Mammary epithelial cell (primary cell): ENCODE measurements at regions of chr9 and their contacts with region 1.

Region 1: GRCh38 chr9:38068866-38069629 is at the start of gene SHB:
- DNase-seq: peak; percentile 58
- H3K4me3 ChIP-seq: peak within 1 kb of the TSS; percentile 79 to 90 (median 84)
- H3K27ac ChIP-seq: peak within 1 kb of the TSS; percentile 44
- H3K4me1 ChIP-seq: peaks cover 21% of the 10 kb centered on the region
- H3K27me3 ChIP-seq: no peaks in the 10 kb centered on the region
- CTCF ChIP-seq: no peak
- total RNA-seq, gene SHB: 30.5 to 31.5 TPM

Region 2: DNA sequence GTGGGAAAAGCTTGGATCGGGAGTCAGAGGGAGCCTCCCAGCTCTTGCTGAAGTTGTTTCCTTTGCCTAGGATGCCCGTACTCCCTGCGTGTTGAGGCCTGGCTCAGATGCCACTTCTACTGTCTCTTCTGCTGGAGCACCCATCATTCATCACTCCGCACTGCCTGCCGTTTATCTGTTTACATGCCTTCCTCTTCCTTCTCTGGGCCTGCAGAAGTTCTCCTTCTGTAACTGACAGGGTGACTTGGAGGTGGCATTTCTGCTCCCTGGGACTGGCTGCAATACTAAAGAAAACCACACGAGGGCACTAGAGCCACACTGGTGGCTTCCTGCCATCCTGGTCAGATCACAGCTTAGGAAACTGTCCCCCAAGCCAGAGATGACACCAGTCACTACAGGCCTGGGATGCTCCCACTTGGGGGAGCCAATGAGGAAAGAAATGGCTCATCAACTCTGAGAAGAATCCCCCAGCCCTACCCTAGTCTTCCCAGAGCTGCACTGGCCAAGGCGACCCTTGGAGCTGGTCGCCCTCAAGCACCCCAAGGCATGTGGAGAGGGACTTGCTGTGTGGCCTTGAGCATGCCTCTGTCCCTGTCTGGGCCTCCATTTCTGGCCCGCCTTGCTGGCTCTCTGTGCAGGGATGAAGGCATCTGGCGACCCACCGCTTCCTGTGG is 155.4 kb before region 1 on chr9:
- CTCF ChIA-PET with region 1: interaction called, 3 read pairs
- dilution Hi-C with region 1: no loop called
- in situ Hi-C with region 1: loop called in 1 of 2 experiments (anchors 5 kb)
- intact Hi-C with region 1: loop called (anchors 1 kb)
- DNase-seq: peak; percentile 65
- H3K4me3 ChIP-seq: no peak overlapping the region
- H3K27ac ChIP-seq: no peak overlapping the region
- H3K4me1 ChIP-seq: peaks cover 18% of the 10 kb centered on the region
- H3K27me3 ChIP-seq: no peaks in the 10 kb centered on the region
- CTCF ChIP-seq: peak; percentile 96 to 98

Region 3: DNA sequence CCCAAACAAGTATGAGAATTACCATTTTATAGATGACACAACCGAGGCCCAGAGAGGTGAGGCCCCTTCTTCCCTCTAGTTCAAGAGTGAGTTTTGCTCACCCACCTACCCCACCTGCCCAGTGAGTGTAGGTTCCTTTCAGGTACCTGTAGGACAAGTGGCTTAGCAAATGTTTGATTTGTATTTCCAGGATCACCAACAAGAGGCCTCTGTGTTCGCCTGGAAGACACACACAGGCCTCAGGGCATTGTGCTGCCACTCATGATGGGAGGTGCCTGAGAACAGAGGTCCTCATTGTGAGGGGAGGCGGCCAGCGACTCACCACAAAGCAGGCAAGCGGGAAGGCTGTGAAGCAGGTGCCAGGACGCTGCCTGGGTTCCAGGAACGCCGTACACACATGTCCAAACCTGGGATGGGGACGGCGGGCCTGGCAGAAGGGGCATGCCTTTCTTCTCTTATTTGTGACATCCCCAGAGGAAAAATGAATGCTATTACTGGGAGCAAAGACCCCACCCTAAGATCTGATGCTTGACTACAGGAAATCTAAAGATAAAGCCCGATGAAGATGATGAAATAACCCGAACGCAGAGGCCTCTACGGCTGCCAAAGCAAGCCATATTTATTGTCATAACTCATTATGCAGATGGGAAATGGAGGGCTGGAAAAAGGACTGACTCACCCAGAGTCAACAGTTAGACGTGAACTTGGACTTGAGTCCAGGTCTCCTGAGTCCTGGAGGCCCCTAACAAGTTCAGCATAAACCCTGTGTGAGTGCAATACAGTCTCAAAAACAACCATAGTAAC is 104.9 kb before region 1 on chr9:
- CTCF ChIA-PET with region 1: no interaction called
- dilution Hi-C with region 1: no loop called
- in situ Hi-C with region 1: no loop called
- intact Hi-C with region 1: loop called (anchors 2 kb)
- DNase-seq: peak; percentile 91
- H3K4me3 ChIP-seq: no peak overlapping the region
- H3K27ac ChIP-seq: peak overlapping the region; percentile 77
- H3K4me1 ChIP-seq: peaks cover 62% of the 10 kb centered on the region
- H3K27me3 ChIP-seq: no peaks in the 10 kb centered on the region
- CTCF ChIP-seq: no peak

Region 4: DNA sequence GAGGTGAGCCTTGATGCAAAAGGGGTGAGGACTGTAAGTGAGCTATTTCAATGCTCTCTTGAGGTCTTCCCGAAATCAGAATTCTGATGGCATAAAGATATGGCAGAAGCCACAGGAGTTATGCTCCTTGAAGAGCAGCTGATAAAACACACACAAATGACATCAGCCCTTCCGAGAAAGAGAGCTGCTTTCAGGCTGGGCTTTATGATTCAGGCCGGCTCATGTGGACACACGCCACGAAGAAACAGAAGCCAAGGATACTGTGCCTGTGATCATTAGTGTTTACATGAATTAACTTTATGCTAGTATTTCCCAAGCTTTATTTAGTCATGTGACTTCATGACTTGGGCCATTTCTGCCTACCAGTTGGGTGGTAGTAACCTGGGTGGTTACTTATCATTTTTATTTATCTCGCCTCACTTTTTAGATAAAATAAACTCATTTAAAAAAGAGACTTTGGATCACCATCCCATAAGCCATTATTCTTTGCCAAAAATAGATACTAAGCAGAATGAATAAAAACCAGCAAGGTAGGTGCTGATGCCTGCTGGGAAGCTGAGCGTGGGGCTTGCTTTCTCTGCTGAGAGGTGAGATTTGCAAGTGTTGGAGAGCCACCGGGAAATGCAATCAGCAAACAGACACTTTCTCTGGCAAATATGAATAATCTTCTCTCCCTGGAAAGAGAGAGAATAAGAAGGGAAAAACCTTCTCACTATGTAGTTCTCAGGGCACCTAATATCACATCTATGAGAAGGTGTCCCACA is 92.2 kb before region 1 on chr9:
- CTCF ChIA-PET with region 1: no interaction called
- dilution Hi-C with region 1: no loop called
- in situ Hi-C with region 1: no loop called
- intact Hi-C with region 1: no loop called
- DNase-seq: peak; percentile 79
- H3K4me3 ChIP-seq: no peak overlapping the region
- H3K27ac ChIP-seq: no peak overlapping the region
- H3K4me1 ChIP-seq: peaks cover 9% of the 10 kb centered on the region
- H3K27me3 ChIP-seq: no peaks in the 10 kb centered on the region
- CTCF ChIP-seq: no peak

Region 5: DNA sequence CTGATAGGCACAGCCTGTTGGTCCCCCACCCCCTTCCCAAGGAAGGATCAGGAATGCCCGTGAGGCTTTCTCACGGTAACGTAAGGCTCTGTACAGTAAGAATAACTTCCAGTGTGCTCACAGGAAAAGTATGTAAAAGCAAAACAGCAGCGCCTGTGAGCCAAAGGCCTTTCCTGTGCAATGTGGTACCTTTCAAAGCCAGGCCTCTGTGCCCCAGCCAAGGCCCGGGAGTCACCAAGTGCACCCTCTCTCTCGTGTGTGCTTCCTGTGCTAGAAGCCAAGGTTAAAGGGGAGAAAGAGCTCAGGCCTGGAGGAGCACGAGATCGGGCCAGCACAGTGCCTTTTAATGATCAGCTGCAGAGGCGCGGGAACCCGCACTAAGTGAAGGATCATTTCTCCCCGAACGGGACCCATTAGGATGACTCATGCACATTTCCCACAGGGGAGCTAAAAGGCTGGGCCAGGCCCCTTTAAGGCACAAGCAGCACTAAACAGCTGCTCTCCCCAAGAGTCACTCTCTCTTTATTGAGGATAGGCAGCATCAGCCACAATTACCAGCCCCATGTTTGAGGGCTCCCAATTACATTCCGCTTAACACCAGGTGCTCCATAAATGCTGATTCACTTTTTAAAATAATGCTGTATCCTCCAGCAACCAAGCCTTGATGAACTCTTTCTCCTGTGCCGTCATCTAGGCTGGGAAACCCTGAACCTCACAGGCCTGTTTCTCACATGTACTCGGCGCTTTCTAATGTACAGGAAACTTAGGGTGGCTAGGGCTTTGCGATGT is 42.8 kb before region 1 on chr9:
- CTCF ChIA-PET with region 1: no interaction called
- dilution Hi-C with region 1: no loop called
- in situ Hi-C with region 1: no loop called
- intact Hi-C with region 1: loop called (anchors 2 kb)
- DNase-seq: peak; percentile 90
- H3K4me3 ChIP-seq: no peak overlapping the region
- H3K27ac ChIP-seq: peak overlapping the region; percentile 82
- H3K4me1 ChIP-seq: peaks cover 54% of the 10 kb centered on the region
- H3K27me3 ChIP-seq: no peaks in the 10 kb centered on the region
- CTCF ChIP-seq: no peak

Region 6: DNA sequence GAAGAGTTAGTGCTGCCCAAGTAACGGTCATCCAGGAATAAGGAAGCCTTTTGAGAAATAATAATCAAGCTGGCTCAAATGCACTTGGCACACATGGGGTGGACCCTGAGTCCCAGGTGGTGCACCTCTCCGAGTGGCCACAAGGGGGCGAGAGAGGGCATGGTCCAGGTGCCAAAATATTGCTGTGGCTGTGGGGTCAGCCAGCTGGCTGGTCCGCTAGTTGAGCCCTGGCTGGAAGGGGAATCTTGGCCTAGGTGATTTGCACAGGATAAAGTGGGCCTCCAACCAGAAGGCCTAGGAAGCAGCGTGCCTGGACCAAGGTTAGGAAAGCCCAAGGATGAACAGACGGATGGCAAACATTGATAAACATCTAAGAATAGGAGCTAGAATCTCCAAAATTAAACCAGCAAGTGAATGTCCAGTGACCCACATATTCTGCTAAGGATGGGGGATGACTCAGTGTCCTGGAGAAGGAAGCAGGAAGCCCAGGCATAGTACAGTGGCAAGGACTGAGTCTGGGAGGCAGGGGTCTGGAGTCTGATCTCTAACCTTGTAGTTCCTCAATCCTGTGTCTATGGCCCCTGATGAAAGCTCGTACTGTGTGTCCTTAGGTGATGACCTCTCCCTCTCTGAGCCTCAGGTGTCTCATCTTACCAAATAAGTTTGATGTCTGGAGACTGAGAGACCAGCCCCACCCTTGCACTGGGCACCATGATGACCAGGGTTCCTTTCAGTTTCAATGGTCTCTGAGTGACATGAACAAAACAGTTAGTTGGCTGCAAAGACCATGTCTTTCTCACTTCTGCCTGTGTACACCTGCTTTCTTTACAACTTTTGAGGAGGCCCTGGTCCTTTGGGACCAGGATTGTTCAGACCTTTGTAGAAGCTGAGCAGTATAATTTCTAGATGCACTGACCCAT is 19.2 kb after region 1 on chr9:
- CTCF ChIA-PET with region 1: no interaction called
- dilution Hi-C with region 1: no loop called
- in situ Hi-C with region 1: no loop called
- intact Hi-C with region 1: loop called (anchors 2 kb)
- DNase-seq: peak; percentile 32
- H3K4me3 ChIP-seq: no peak overlapping the region
- H3K27ac ChIP-seq: no peak overlapping the region
- H3K4me1 ChIP-seq: peaks cover 1% of the 10 kb centered on the region
- H3K27me3 ChIP-seq: no peaks in the 10 kb centered on the region
- CTCF ChIP-seq: peak; percentile 93 to 98

Region 7: GRCh38 chr9:38362852-38363593 is 294.0 kb after region 1 on chr9:
- CTCF ChIA-PET with region 1: no interaction called
- dilution Hi-C with region 1: no loop called
- in situ Hi-C with region 1: no loop called
- intact Hi-C with region 1: loop called (anchors 1 kb)
- DNase-seq: peak; percentile 61
- H3K4me3 ChIP-seq: no peak overlapping the region
- H3K27ac ChIP-seq: no peak overlapping the region
- H3K4me1 ChIP-seq: peaks cover 3% of the 10 kb centered on the region
- H3K27me3 ChIP-seq: no peaks in the 10 kb centered on the region
- CTCF ChIP-seq: peak; percentile 60 to 71